ENCODE measurements at regions of chr14 and their contacts with region 1.

Region 1: GRCh38 chr14:77760381-77761246 is at the start of gene SNW1:
- DNase-seq: peak; percentile 84
- ATAC-seq: peak; percentile 95
- H3K4me3 ChIP-seq: peak within 1 kb of the TSS; percentile 88
- H3K27ac ChIP-seq: peak within 1 kb of the TSS; percentile 82
- H3K4me1 ChIP-seq: peaks cover 2% of the 10 kb centered on the region
- H3K27me3 ChIP-seq: no peaks in the 10 kb centered on the region
- CTCF ChIP-seq: no peak
- EP300 ChIP-seq: no peak
- POLR2A ChIP-seq: peak; percentile 88
- RAD21 ChIP-seq: no peak
- polyA plus RNA-seq, gene SNW1: 73.7 to 86.8 TPM

Region 2: GRCh38 chr14:77707724-77708408 is 52.7 kb before region 1 on chr14 and contains the starts of genes ALKBH1 and SLIRP:
- CTCF ChIA-PET with region 1: no interaction called
- POLR2A ChIA-PET with region 1: interaction called, 3 read pairs
- RAD21 ChIA-PET with region 1: no interaction called
- SMC1A ChIA-PET with region 1: interaction called, 3 read pairs
- in situ Hi-C with region 1: no loop called
- intact Hi-C with region 1: loop called (anchors 2 kb)
- DNase-seq: peak; percentile 26
- ATAC-seq: peak; percentile 98
- H3K4me3 ChIP-seq: peak within 1 kb of the TSS; percentile 92
- H3K27ac ChIP-seq: peak within 1 kb of the TSS; percentile 64
- H3K4me1 ChIP-seq: peaks cover 7% of the 10 kb centered on the region
- H3K27me3 ChIP-seq: no peaks in the 10 kb centered on the region
- CTCF ChIP-seq: no peak
- EP300 ChIP-seq: no peak
- POLR2A ChIP-seq: peak; percentile 97
- RAD21 ChIP-seq: no peak
- polyA plus RNA-seq, gene ALKBH1: 6.5 to 9.3 TPM
- polyA plus RNA-seq, gene SLIRP: 1,396 to 1,510 TPM

Region 3: DNA sequence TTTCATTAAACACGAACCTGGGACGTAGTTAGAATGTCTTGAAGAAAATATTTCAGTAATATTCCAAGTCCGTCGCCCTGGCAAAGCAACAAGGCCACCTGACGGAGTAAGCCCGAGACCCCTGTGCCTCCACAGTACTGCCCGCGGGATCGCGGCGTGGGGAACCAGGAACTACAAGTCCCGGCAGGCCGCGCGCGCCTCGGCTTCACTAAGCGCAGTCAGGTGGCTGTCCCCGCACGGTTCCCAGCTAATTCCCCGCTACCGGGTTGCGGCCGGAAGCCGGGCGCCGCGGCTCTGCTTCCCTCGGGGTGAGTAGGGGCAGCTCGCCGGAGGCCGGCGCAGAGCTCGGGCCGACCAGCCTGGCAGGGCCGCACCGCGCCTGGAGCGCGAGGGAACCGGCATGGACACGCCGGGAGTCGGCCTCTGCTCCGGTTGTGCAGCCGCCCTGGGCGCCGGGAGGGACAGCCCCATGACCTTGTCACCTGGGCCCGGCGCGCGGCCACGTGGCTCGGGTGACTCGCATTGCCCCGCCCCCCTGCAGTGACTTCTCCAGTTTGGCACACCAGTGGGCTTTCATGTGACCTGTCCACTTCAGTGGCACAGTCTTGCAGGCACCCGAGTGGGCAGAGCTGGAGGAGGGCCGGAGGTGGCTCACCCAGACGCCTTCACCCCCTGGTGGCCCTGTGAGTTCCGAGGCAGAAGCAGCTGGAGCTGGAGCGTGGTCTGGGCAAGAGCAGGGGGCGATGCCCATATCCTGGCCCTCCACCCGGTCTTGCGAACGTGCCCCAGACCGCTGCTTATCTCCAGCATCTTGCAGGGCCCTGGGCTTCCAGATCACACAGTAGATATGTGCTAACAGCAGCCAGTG is 39.5 kb after region 1 on chr14 and contains the start of gene ADCK1:
- CTCF ChIA-PET with region 1: interaction called, 11 read pairs
- POLR2A ChIA-PET with region 1: interaction called, 3 read pairs
- RAD21 ChIA-PET with region 1: interaction called, 3 read pairs
- SMC1A ChIA-PET with region 1: interaction called, 3 read pairs
- in situ Hi-C with region 1: no loop called
- intact Hi-C with region 1: loop called (anchors 1 kb)
- DNase-seq: peak; percentile 34
- ATAC-seq: peak; percentile 97
- H3K4me3 ChIP-seq: peak within 1 kb of the TSS; percentile 86
- H3K27ac ChIP-seq: peak within 1 kb of the TSS; percentile 55
- H3K4me1 ChIP-seq: peaks cover 3% of the 10 kb centered on the region; the same call in 1 of the 2 replicates
- H3K27me3 ChIP-seq: no peaks in the 10 kb centered on the region
- CTCF ChIP-seq: peak; percentile 18 to 39 (median 22); a peak in 2 of 6 replicates
- EP300 ChIP-seq: no peak
- POLR2A ChIP-seq: peak; percentile 90
- RAD21 ChIP-seq: peak; percentile 5; the same call in 1 of the 2 replicates
- polyA plus RNA-seq, gene ADCK1: 3.5 to 3.6 TPM

Measured in GM12878 (cell line).